Dendritic cell treated with granulocyte-macrophage colony-stimulating factor and Interleukin-4, amounts not matched to agents 40 ng/mL and 50 ng/mL, for 4 days (primary cell): ENCODE measurements at regions of chr5 and their contacts with region 1.

Region 1: GRCh38 chr5:36241631-36242533 is at the start of gene NADK2:
- H3K4me3 Mint-ChIP-seq: peak within 1 kb of the TSS; percentile 89
- H3K27ac Mint-ChIP-seq: peak within 1 kb of the TSS; percentile 94
- H3K4me1 Mint-ChIP-seq: peaks cover 39% of the 10 kb centered on the region
- H3K27me3 Mint-ChIP-seq: no peaks in the 10 kb centered on the region

Region 2: DNA sequence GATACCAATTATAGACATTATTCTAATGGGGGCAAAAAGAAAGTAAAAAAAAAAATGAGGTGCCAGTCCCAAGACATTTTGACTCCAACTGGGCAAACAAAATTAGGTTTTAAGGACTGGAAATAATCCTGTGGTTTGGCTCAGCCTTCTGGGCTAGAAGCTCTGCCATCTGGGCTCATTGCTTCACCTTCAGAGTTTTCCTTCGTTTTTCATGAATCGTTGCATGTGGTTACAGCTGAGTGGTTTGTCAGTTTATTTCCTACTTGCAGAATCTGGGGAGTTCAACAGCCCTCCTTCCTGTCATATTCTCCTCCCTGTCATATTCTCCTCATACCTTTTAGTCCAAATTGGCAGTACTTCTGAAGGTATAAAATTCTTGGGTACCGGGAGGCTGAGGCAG is 187.2 kb before region 1 on chr5:
- intact Hi-C with region 1: no loop called
- H3K4me3 Mint-ChIP-seq: no peak overlapping the region
- H3K27ac Mint-ChIP-seq: no peak overlapping the region
- H3K4me1 Mint-ChIP-seq: no peaks in the 10 kb centered on the region
- H3K27me3 Mint-ChIP-seq: no peaks in the 10 kb centered on the region

Region 3: GRCh38 chr5:36151434-36152323 is 90.2 kb before region 1 on chr5 and contains the starts of genes LMBRD2 and SKP2:
- intact Hi-C with region 1: loop called (anchors 1 kb)
- H3K4me3 Mint-ChIP-seq: peak within 1 kb of the TSS; percentile 94
- H3K27ac Mint-ChIP-seq: peak within 1 kb of the TSS; percentile 90
- H3K4me1 Mint-ChIP-seq: peaks cover 58% of the 10 kb centered on the region
- H3K27me3 Mint-ChIP-seq: no peaks in the 10 kb centered on the region